ENCODE measurements at regions of chr21 and their contacts with region 1.

Region 1: GRCh38 chr21:44742418-44743153 is 31.2 kb upstream of the TSPEAR start:
- DNase-seq: peak in 1 of 2 experiments; percentile 40
- H3K4me3 ChIP-seq: no peak overlapping the region
- H3K4me3 Mint-ChIP-seq: no peak overlapping the region
- H3K27ac Mint-ChIP-seq: no peak overlapping the region
- H3K4me1 ChIP-seq: no peaks in the 10 kb centered on the region
- H3K4me1 Mint-ChIP-seq: no peaks in the 10 kb centered on the region
- H3K27me3 ChIP-seq: no peaks in the 10 kb centered on the region
- H3K27me3 Mint-ChIP-seq: peaks cover 1% of the 10 kb centered on the region
- CTCF ChIP-seq: peak in 1 of 2 experiments; percentile 49

Region 2: DNA sequence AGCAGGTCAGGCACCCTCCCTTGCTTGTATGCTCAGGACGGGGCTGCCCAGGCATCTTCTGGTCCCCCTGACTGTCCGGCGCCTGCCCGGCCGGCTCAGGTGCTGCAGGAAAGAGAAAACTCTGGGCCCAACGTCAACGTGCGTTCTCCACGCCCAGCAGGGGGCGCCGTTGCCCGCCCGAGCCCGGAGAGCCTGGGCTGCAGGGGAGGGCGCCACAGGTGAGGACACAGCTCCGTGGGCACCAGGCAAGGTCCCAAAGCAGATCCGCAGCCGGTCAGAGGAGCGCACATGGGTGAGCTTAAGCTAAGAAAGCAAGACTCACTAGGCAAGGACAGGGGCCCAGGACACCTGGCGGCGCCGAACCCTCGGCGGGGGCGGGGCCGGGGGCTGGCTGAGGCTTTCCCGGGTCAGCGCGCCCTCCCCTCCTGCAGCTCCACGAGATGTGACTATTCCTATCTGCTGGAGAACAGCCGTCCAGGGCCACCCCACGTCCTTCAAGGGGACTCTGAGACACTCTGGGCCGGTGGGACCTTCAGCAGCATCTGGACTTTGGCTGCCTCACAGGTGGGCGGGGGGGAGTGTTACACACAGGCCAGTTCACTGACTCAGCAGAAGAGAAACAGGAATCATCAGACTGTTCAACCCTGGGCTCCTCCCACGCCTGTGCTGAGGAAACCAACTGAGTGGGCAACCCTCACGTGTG is 231.9 kb before region 1 on chr21:
- CTCF ChIA-PET with region 1: interaction called, 46 read pairs
- POLR2A ChIA-PET with region 1: interaction called, 3 read pairs
- intact Hi-C with region 1: no loop called
- DNase-seq: peak; percentile 79 to 89
- H3K4me3 ChIP-seq: peak overlapping the region; percentile 49
- H3K4me3 Mint-ChIP-seq: peak overlapping the region; percentile 62
- H3K27ac Mint-ChIP-seq: no peak overlapping the region
- H3K4me1 ChIP-seq: peaks cover 7% of the 10 kb centered on the region
- H3K4me1 Mint-ChIP-seq: no peaks in the 10 kb centered on the region
- H3K27me3 ChIP-seq: no peaks in the 10 kb centered on the region
- H3K27me3 Mint-ChIP-seq: no peaks in the 10 kb centered on the region
- CTCF ChIP-seq: peak; percentile 90 to 92

Measured in Caco-2 (cell line).